PC-3 (cell line): ENCODE measurements at regions of chr6 and their contacts with region 1.

Region 1: GRCh38 chr6:121319112-121319553 is 15.1 kb downstream of the TBC1D32 start:
- DNase-seq: peak; percentile 58
- ATAC-seq: peak; percentile 54; the same call in 1 of the 2 replicates
- H3K4me3 ChIP-seq: no peak overlapping the region
- H3K27ac ChIP-seq: no peak overlapping the region
- H3K4me1 ChIP-seq: no peaks in the 10 kb centered on the region
- H3K27me3 ChIP-seq: no peaks in the 10 kb centered on the region
- CTCF ChIP-seq: peak; percentile 53; the same call in 1 of the 2 replicates

Region 2: GRCh38 chr6:119814609-119815400 is 1504.3 kb before region 1 on chr6:
- CTCF ChIA-PET with region 1: no interaction called
- POLR2A ChIA-PET with region 1: no interaction called
- intact Hi-C with region 1: no loop called
- DNase-seq: no peak
- ATAC-seq: no peak
- H3K4me3 ChIP-seq: no peak overlapping the region
- H3K27ac ChIP-seq: no peak overlapping the region
- H3K4me1 ChIP-seq: peaks cover 12% of the 10 kb centered on the region
- H3K27me3 ChIP-seq: no peaks in the 10 kb centered on the region
- CTCF ChIP-seq: no peak

Region 3: GRCh38 chr6:120652506-120652905 is 666.6 kb before region 1 on chr6:
- CTCF ChIA-PET with region 1: no interaction called
- POLR2A ChIA-PET with region 1: no interaction called
- intact Hi-C with region 1: no loop called
- DNase-seq: no peak
- ATAC-seq: no peak
- H3K4me3 ChIP-seq: no peak overlapping the region
- H3K27ac ChIP-seq: no peak overlapping the region
- H3K4me1 ChIP-seq: no peaks in the 10 kb centered on the region
- H3K27me3 ChIP-seq: no peaks in the 10 kb centered on the region
- CTCF ChIP-seq: no peak

Region 4: GRCh38 chr6:121334299-121335086 is 15.4 kb after region 1 on chr6 and contains the start of gene TBC1D32:
- CTCF ChIA-PET with region 1: no interaction called
- POLR2A ChIA-PET with region 1: interaction called, 10 read pairs
- intact Hi-C with region 1: no loop called
- DNase-seq: peak; percentile 82
- ATAC-seq: peak; percentile 97
- H3K4me3 ChIP-seq: peak within 1 kb of the TSS; percentile 98
- H3K27ac ChIP-seq: peak within 1 kb of the TSS; percentile 44
- H3K4me1 ChIP-seq: peaks cover 10% of the 10 kb centered on the region; the same call in 1 of the 2 replicates
- H3K27me3 ChIP-seq: no peaks in the 10 kb centered on the region
- CTCF ChIP-seq: no peak
- total RNA-seq, gene TBC1D32: 2.7 and 5.4 TPM in 2 replicates

Region 5: DNA sequence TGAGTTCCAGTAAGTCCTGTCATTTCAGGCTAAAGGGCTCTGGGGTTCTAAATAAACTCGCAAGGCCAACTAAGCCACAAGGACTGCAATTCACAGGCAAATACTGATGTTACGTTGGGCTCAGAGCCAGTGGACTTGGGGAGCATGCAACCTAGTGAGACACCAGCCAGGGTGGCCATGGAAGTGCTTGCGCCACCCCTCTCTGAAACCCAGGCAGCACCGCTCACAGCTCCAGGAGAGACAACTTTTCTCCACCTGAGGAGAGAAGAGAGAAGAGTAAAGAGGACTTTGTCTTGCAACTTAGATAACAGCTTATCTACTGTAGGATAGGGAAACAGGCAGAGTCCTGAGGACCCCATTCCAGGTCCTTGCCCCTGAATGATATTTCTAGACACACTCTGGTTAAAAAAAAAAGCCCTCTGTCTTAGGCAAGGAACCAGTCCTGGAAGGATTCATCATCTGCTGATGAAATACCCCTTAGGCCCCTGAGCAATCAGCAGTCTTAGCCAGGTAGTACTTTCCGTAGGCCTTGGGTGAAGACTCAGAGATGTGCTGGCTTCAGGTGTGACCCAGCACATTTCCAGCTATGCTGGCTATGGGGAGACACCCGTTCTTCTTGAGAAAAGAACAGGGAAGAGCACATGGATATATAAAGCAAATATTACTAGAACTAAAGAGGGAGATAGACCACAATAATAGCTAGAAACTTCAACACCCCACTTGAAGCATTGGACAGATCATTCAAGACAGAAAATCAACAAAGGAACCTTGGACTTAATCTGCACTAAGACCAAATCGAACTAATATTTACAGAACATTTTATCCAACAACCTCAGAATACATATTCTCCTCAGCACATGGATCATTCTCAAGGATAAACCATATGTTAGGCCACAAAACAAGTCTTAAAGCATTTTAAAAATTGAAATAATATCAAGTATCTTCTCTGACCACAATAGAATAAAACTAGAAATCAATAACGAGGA is 46.7 kb after region 1 on chr6:
- CTCF ChIA-PET with region 1: no interaction called
- POLR2A ChIA-PET with region 1: no interaction called
- intact Hi-C with region 1: no loop called
- DNase-seq: no peak
- ATAC-seq: no peak
- H3K4me3 ChIP-seq: no peak overlapping the region
- H3K27ac ChIP-seq: no peak overlapping the region
- H3K4me1 ChIP-seq: no peaks in the 10 kb centered on the region
- H3K27me3 ChIP-seq: peaks cover 6% of the 10 kb centered on the region; the same call in 1 of the 2 replicates
- CTCF ChIP-seq: no peak

Region 6: DNA sequence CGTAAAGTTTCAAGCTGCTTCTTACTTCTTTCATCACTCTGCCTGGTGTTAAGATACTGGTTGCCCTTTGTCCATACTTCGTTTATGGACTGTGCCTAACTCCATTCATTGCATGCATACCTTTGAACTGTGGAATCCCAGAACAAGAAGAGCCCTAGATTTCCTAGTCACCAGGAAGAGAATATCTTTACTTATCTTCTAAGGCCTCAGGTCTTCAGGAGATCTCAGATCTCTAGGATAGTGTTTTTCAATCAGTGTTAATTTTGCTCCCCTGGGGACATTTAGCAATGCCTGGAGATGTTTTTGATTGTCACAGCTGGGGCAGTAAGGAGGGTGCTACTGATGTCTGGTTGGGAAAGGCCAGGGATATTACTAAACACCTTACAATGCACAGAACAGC is 80.8 kb after region 1 on chr6:
- CTCF ChIA-PET with region 1: interaction called, 3 read pairs
- POLR2A ChIA-PET with region 1: no interaction called
- intact Hi-C with region 1: loop called (anchors 1 kb)
- DNase-seq: no peak
- ATAC-seq: no peak
- H3K4me3 ChIP-seq: no peak overlapping the region
- H3K27ac ChIP-seq: no peak overlapping the region
- H3K4me1 ChIP-seq: no peaks in the 10 kb centered on the region
- H3K27me3 ChIP-seq: no peaks in the 10 kb centered on the region
- CTCF ChIP-seq: no peak

Region 7: GRCh38 chr6:122033539-122034181 is 714.5 kb after region 1 on chr6:
- CTCF ChIA-PET with region 1: interaction called, 4 read pairs
- POLR2A ChIA-PET with region 1: no interaction called
- intact Hi-C with region 1: loop called (anchors 10 kb)
- DNase-seq: peak; percentile 60
- ATAC-seq: peak; percentile 65
- H3K4me3 ChIP-seq: no peak overlapping the region
- H3K27ac ChIP-seq: no peak overlapping the region
- H3K4me1 ChIP-seq: no peaks in the 10 kb centered on the region
- H3K27me3 ChIP-seq: no peaks in the 10 kb centered on the region
- CTCF ChIP-seq: peak; percentile 64